ENCODE measurements at regions of chr17 and their contacts with region 1.

Region 1: GRCh38 chr17:10697092-10698081 is at the starts of genes ADPRM and SCO1:
- DNase-seq: peak; percentile 77 to 89 (median 85)
- ATAC-seq: peak; percentile 97
- H3K4me3 ChIP-seq: peak within 1 kb of the TSS; percentile 95
- H3K4me3 Mint-ChIP-seq: peak within 1 kb of the TSS; percentile 83 to 100 (median 95)
- H3K27ac ChIP-seq: peak within 1 kb of the TSS; percentile 97
- H3K27ac Mint-ChIP-seq: peak within 1 kb of the TSS; percentile 90 to 99 (median 96)
- H3K4me1 ChIP-seq: peaks cover 17 to 43% of the 10 kb centered on the region in 2 donors
- H3K4me1 Mint-ChIP-seq: peaks cover 34 to 77% (median 65%) of the 10 kb centered on the region in 7 donors
- H3K27me3 ChIP-seq: no peaks in the 10 kb centered on the region
- H3K27me3 Mint-ChIP-seq: no peaks in the 10 kb centered on the region
- total RNA-seq, gene ADPRM: 16.4 to 70.4 (median 32.1) TPM
- total RNA-seq, gene SCO1: 13.6 to 29.2 (median 26.7) TPM

Region 2: DNA sequence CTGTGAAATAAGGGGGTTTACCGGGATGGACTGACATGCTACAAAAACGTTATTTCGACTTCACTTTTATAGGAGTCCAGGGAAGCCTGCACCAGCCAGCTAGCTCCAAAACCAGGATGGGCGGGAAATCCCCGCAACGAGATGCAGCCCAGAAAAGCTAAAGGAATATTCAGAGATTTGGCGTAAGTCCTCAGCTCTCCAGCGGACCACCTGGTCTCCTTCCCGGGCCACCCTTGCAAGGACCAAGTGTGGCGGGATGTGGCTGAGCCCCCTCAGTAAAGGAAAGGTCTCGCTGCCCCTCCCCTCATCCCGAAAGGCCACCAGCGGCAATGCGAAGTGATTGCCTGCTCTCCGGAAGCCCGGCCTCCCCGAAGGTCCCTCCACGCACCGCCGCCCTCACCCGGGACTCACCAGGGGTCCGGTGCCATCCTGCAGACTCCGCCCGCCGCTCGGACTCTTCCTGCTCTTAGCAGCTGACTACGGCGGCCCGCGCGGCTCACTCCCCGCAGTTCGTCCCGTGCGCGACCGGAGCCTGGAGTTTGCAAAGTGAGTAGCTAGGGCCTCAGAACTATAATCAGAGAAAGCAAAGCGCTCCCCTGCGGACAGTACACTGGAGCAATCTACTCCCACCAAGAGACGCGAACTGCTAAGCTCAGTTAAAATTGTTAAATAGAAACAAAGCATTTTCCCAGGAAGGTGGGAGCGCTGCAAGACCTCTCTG is 1121.8 kb before region 1 on chr17 and contains the start of gene STX8:
- CTCF ChIA-PET with region 1: no interaction called
- POLR2A ChIA-PET with region 1: no interaction called
- intact Hi-C with region 1: loop called in 1 of 2 experiments (anchors 5 kb)
- DNase-seq: peak; percentile 56 to 84 (median 68)
- ATAC-seq: peak; percentile 85
- H3K4me3 ChIP-seq: peak within 1 kb of the TSS; percentile 89
- H3K4me3 Mint-ChIP-seq: peak within 1 kb of the TSS; percentile 97 to 100 (median 99)
- H3K27ac ChIP-seq: peak within 1 kb of the TSS; percentile 67
- H3K27ac Mint-ChIP-seq: peak within 1 kb of the TSS; percentile 82 to 94 (median 92)
- H3K4me1 ChIP-seq: peaks cover 0 to 10% of the 10 kb centered on the region in 2 donors
- H3K4me1 Mint-ChIP-seq: peaks cover 18 to 36% (median 33%) of the 10 kb centered on the region in 7 donors
- H3K27me3 ChIP-seq: no peaks in the 10 kb centered on the region
- H3K27me3 Mint-ChIP-seq: no peaks in the 10 kb centered on the region
- total RNA-seq, gene STX8: 45.1 to 71.3 (median 48.9) TPM

Region 3: DNA sequence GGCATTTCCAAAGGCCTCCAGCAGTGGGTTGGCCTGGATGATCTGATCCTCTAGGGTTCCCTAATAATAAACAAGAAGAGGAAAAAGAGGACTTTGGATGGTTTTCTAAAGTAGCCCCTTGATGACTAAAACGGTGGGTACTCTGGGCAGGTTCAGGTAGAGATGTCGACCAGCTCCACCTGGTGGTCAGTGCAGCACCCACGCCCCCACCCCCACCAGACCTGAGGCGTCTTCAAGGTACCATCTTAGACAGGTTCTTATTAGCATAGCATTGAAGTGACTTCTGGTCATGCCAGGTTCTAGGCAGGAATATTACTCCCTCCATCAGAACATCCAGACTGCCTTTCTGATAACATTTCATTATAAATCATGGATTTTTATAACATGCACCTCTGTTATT is 339.6 kb before region 1 on chr17:
- CTCF ChIA-PET with region 1: no interaction called
- POLR2A ChIA-PET with region 1: no interaction called
- intact Hi-C with region 1: no loop called
- DNase-seq: no peak
- ATAC-seq: no peak
- H3K4me3 ChIP-seq: no peak overlapping the region
- H3K4me3 Mint-ChIP-seq: no peak overlapping the region
- H3K27ac ChIP-seq: no peak overlapping the region
- H3K27ac Mint-ChIP-seq: no peak overlapping the region
- H3K4me1 ChIP-seq: no peaks in the 10 kb centered on the region
- H3K4me1 Mint-ChIP-seq: no peaks in the 10 kb centered on the region
- H3K27me3 ChIP-seq: no peaks in the 10 kb centered on the region
- H3K27me3 Mint-ChIP-seq: peaks cover 0 to 4% (median 0%) of the 10 kb centered on the region in 5 donors

Region 4: GRCh38 chr17:10574324-10574723 is 123.1 kb before region 1 on chr17:
- CTCF ChIA-PET with region 1: no interaction called
- POLR2A ChIA-PET with region 1: no interaction called
- intact Hi-C with region 1: no loop called
- DNase-seq: no peak
- ATAC-seq: no peak
- H3K4me3 ChIP-seq: no peak overlapping the region
- H3K4me3 Mint-ChIP-seq: no peak overlapping the region
- H3K27ac ChIP-seq: no peak overlapping the region
- H3K27ac Mint-ChIP-seq: no peak overlapping the region
- H3K4me1 ChIP-seq: no peaks in the 10 kb centered on the region
- H3K4me1 Mint-ChIP-seq: no peaks in the 10 kb centered on the region
- H3K27me3 ChIP-seq: no peaks in the 10 kb centered on the region
- H3K27me3 Mint-ChIP-seq: peaks cover 0 to 46% (median 22%) of the 10 kb centered on the region in 5 donors

Region 5: GRCh38 chr17:10646392-10646990 is 50.9 kb before region 1 on chr17:
- CTCF ChIA-PET with region 1: interaction called, 3 read pairs
- POLR2A ChIA-PET with region 1: no interaction called
- intact Hi-C with region 1: loop called in 1 of 2 experiments (anchors 5 kb)
- DNase-seq: peak; percentile 38 to 84 (median 67)
- ATAC-seq: peak; percentile 79
- H3K4me3 ChIP-seq: no peak overlapping the region
- H3K4me3 Mint-ChIP-seq: no peak overlapping the region
- H3K27ac ChIP-seq: no peak overlapping the region
- H3K27ac Mint-ChIP-seq: peak overlapping the region in 1 of 9 donors; percentile 9
- H3K4me1 ChIP-seq: no peaks in the 10 kb centered on the region
- H3K4me1 Mint-ChIP-seq: no peaks in the 10 kb centered on the region
- H3K27me3 ChIP-seq: no peaks in the 10 kb centered on the region
- H3K27me3 Mint-ChIP-seq: no peaks in the 10 kb centered on the region

Region 6: DNA sequence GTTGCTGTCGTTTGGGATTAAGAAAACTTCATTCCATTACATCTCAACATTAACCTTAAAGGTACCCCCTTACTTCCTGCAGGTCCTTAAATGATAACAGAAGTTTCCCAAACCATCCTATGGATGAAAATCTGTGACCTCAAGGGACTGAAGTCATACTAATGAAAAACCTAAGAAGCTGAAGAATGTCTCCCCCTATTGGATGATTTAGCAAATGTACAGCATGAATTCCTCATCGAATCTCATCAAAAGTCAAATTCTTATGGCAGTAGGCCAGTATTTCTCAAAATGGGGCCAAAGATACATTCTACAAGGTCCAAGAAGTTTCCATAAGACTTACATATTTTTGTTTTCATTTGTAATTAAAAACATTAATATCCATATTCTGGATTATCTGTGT is 13.5 kb before region 1 on chr17:
- CTCF ChIA-PET with region 1: interaction called, 5 read pairs
- POLR2A ChIA-PET with region 1: interaction called, 10 read pairs
- intact Hi-C with region 1: no loop called
- DNase-seq: no peak
- ATAC-seq: no peak
- H3K4me3 ChIP-seq: no peak overlapping the region
- H3K4me3 Mint-ChIP-seq: no peak overlapping the region
- H3K27ac ChIP-seq: no peak overlapping the region
- H3K27ac Mint-ChIP-seq: peak overlapping the region in 1 of 9 donors; percentile 18
- H3K4me1 ChIP-seq: no peaks in the 10 kb centered on the region
- H3K4me1 Mint-ChIP-seq: peaks cover 3 to 13% (median 11%) of the 10 kb centered on the region in 7 donors
- H3K27me3 ChIP-seq: no peaks in the 10 kb centered on the region
- H3K27me3 Mint-ChIP-seq: no peaks in the 10 kb centered on the region

Region 7: GRCh38 chr17:10713318-10713717 is 15.9 kb after region 1 on chr17:
- CTCF ChIA-PET with region 1: interaction called, 4 read pairs
- POLR2A ChIA-PET with region 1: interaction called, 14 read pairs
- intact Hi-C with region 1: loop called in 1 of 2 experiments (anchors 2 kb)
- DNase-seq: no peak
- ATAC-seq: no peak
- H3K4me3 ChIP-seq: no peak overlapping the region
- H3K4me3 Mint-ChIP-seq: no peak overlapping the region
- H3K27ac ChIP-seq: no peak overlapping the region
- H3K27ac Mint-ChIP-seq: peak overlapping the region in 3 of 9 donors; percentile 17 to 38 (median 19)
- H3K4me1 ChIP-seq: no peaks in the 10 kb centered on the region
- H3K4me1 Mint-ChIP-seq: peaks cover 4 to 32% (median 15%) of the 10 kb centered on the region in 7 donors
- H3K27me3 ChIP-seq: no peaks in the 10 kb centered on the region
- H3K27me3 Mint-ChIP-seq: no peaks in the 10 kb centered on the region

Region 8: GRCh38 chr17:10729334-10730193 is 32.2 kb after region 1 on chr17 and contains the start of gene TMEM220:
- CTCF ChIA-PET with region 1: interaction called, 3 read pairs
- POLR2A ChIA-PET with region 1: interaction called, 11 read pairs
- intact Hi-C with region 1: loop called (anchors 1 to 2 kb)
- DNase-seq: peak in 8 of 9 donors; percentile 20 to 50 (median 33)
- ATAC-seq: peak; percentile 83
- H3K4me3 ChIP-seq: peak within 1 kb of the TSS; percentile 77
- H3K4me3 Mint-ChIP-seq: peak within 1 kb of the TSS; percentile 88 to 97 (median 92)
- H3K27ac ChIP-seq: peak within 1 kb of the TSS; percentile 65
- H3K27ac Mint-ChIP-seq: peak within 1 kb of the TSS; percentile 53 to 91 (median 86)
- H3K4me1 ChIP-seq: no peaks in the 10 kb centered on the region
- H3K4me1 Mint-ChIP-seq: peaks cover 7 to 50% (median 25%) of the 10 kb centered on the region in 7 donors
- H3K27me3 ChIP-seq: peaks cover 0 to 4% of the 10 kb centered on the region in 2 donors
- H3K27me3 Mint-ChIP-seq: peaks cover 0 to 8% (median 0%) of the 10 kb centered on the region in 5 donors
- total RNA-seq, gene TMEM220: 0.65 to 7.4 (median 2.9) TPM